ENCODE measurements at regions of chr2 and their contacts with region 1.

Region 1: GRCh38 chr2:118003396-118003824 is 10.5 kb downstream of the CCDC93 start:
- DNase-seq: peak; percentile 72
- H3K4me3 ChIP-seq: no peak overlapping the region
- H3K27ac ChIP-seq: no peak overlapping the region
- H3K4me1 ChIP-seq: no peaks in the 10 kb centered on the region
- H3K27me3 ChIP-seq: no peaks in the 10 kb centered on the region
- CTCF ChIP-seq: peak; percentile 80

Region 2: GRCh38 chr2:117814417-117815264 is 188.8 kb before region 1 on chr2 and contains the start of gene DDX18:
- intact Hi-C with region 1: loop called (anchors 5 kb)
- DNase-seq: peak; percentile 99
- H3K4me3 ChIP-seq: peak within 1 kb of the TSS; percentile 87
- H3K27ac ChIP-seq: peak within 1 kb of the TSS; percentile 75
- H3K4me1 ChIP-seq: peaks cover 7% of the 10 kb centered on the region
- H3K27me3 ChIP-seq: no peaks in the 10 kb centered on the region
- CTCF ChIP-seq: peak; percentile 99
- total RNA-seq, gene DDX18: 42.0 to 63.3 TPM

Region 3: GRCh38 chr2:117835990-117836760 is 167.2 kb before region 1 on chr2:
- intact Hi-C with region 1: loop called (anchors 2 kb)
- DNase-seq: peak; percentile 77
- H3K4me3 ChIP-seq: peak overlapping the region; percentile 30
- H3K27ac ChIP-seq: no peak overlapping the region
- H3K4me1 ChIP-seq: no peaks in the 10 kb centered on the region
- H3K27me3 ChIP-seq: no peaks in the 10 kb centered on the region
- CTCF ChIP-seq: peak; percentile 66